H1 (cell line): ENCODE measurements at regions of chr1 and their contacts with region 1.

Region 1: GRCh38 chr1:153608742-153609584 is 4.0 kb downstream of the S100A16 start:
- DNase-seq: peak; percentile 41 to 90
- H3K4me3 ChIP-seq: no peak overlapping the region
- H3K27ac ChIP-seq: no peak overlapping the region
- H3K4me1 ChIP-seq: peaks cover 0 to 35% (median 21%) of the 10 kb centered on the region in 4 experiments; a peak in 6 of 7 replicates
- H3K27me3 ChIP-seq: no peaks in the 10 kb centered on the region; a peak in 1 of 7 replicates
- CTCF ChIP-seq: no peak
- EP300 ChIP-seq: no peak
- POLR2A ChIP-seq: no peak
- RAD21 ChIP-seq: no peak

Region 2: DNA sequence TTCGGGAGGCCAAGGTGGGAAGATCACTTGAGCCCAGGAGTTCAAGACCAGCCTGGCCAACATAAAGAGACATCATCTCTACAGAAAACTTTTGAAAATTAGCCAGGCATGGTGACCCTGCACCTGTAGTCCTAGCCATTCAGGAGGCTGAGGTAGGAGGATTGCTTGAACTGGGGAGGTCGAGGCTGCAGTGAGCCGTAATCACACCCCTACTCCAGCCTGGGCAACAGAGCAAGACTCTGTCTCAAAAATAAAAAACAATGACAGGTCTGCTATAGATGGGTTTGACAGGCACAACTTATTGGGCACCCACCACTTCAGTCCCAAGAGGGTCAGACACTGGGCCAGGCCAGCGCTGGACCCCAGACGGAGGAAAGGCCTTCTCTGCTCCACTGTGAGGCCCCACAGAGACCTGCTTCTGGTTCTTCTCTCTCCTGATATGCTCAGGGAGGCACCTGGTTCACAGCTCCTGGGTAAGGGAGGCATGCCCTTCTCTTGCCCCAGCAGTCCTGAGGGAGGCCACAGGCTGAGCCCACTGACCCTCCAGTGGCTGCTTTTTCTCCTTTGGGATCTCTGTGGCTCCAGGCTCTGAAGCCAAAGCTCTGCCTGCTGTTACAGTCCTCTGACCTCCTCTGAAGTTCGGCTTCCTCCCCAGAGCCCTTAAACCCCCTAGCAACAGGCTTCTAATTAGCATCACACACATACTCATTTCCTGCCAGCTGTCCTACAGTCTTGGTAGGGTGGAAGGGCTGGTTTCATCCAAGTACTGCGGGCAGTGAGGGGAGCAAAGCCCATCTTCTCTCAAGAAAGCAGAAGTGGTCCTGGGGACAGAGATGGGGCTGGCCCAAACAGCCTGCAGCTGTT is 10.4 kb before region 1 on chr1:
- CTCF ChIA-PET with region 1: interaction called, 80 read pairs
- POLR2A ChIA-PET with region 1: interaction called, 15 read pairs
- DNase-seq: peak; percentile 53 to 63
- H3K4me3 ChIP-seq: no peak overlapping the region
- H3K27ac ChIP-seq: no peak overlapping the region
- H3K4me1 ChIP-seq: peaks cover 3 to 10% (median 5%) of the 10 kb centered on the region in 4 experiments; a peak in 4 of 7 replicates
- H3K27me3 ChIP-seq: no peaks in the 10 kb centered on the region
- CTCF ChIP-seq: no peak
- EP300 ChIP-seq: peak in 1 of 2 experiments; percentile 80; a peak in 1 of 3 replicates
- POLR2A ChIP-seq: peak in 1 of 2 experiments; percentile 59; a peak in 2 of 3 replicates
- RAD21 ChIP-seq: 0 out of 4 replicates have a peak, but pooled peaks of 1 of the 2 experiments have one; percentile 8

Region 3: DNA sequence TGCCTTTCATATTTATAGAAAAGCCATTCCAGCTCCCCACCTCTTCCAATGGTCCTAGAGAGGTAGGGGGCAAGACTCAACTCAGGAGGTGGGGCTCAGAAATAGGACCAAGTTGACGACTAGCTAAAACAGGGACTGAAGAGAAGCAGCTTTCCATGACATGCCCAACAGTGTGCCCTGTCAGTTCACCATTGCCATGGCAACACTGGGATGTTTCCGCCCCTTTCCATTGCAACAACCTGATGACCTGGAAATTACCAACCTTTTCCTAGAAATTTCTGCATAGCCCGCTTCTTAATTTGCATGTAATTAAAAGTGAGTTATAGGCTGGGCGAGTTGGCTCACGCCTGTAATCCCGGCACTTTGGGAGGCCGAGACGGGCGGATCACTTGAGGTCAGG is 96.5 kb after region 1 on chr1:
- CTCF ChIA-PET with region 1: no interaction called
- POLR2A ChIA-PET with region 1: no interaction called
- DNase-seq: no peak
- H3K4me3 ChIP-seq: no peak overlapping the region
- H3K27ac ChIP-seq: no peak overlapping the region
- H3K4me1 ChIP-seq: no peaks in the 10 kb centered on the region
- H3K27me3 ChIP-seq: no peaks in the 10 kb centered on the region
- CTCF ChIP-seq: no peak
- EP300 ChIP-seq: no peak
- POLR2A ChIP-seq: no peak
- RAD21 ChIP-seq: no peak